ENCODE measurements at regions of chr11 and their contacts with region 1.

Region 1: GRCh38 chr11:207208-207862 is at the starts of genes BET1L and RIC8A:
- H3K4me3 Mint-ChIP-seq: peak within 1 kb of the TSS; percentile 87
- H3K27ac Mint-ChIP-seq: peak within 1 kb of the TSS; percentile 99
- H3K4me1 Mint-ChIP-seq: peaks cover 72% of the 10 kb centered on the region
- H3K27me3 Mint-ChIP-seq: no peaks in the 10 kb centered on the region

Region 2: DNA sequence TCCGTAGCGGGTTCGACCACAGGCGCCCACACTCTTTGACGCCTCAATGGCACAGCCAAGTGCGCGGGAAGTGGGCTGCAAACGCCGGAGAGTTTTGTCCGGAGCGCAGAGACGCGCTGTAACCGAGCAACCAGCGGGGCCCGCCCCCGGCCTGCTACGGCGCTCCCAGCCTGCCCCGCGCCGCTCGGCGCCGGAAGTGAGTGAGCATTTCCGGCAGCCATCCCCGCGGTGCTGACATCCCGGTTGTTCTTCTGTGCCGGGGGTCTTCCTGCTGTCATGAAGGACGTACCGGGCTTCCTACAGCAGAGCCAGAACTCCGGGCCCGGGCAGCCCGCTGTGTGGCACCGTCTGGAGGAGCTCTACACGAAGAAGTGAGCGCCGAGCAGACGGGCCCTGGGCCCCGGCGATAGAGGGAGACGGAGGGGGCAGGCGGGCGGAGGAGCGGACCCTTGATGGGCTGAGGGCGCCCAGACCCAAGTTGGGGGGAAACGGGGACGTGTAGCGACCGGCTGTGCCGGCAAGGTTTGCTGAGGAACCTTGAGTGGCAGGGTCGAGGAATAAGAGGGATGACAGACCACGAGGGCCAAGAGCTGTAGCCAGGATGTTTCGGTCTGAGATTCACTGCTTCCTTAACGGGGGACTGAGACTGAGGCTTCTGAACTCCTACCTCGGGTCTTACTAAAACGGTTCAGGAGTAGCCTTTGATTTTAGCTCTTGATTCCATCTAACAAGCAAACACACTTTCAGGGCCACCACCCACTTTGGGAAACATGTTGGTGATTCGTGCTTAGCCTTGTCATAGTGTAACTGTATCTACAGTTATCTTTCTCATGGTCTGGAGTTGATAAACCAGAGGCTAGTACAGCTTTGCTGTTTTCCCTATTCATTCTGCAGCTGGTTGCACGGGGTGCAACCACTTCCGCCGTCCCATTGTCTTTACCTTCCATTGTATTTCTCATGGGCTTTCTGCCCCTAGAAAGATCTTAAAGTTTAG is 29.7 kb after region 1 on chr11 and contains the start of gene PSMD13:
- intact Hi-C with region 1: loop called (anchors 1 kb)
- H3K4me3 Mint-ChIP-seq: peak within 1 kb of the TSS; percentile 95
- H3K27ac Mint-ChIP-seq: peak within 1 kb of the TSS; percentile 96
- H3K4me1 Mint-ChIP-seq: peaks cover 27% of the 10 kb centered on the region
- H3K27me3 Mint-ChIP-seq: no peaks in the 10 kb centered on the region

Region 3: DNA sequence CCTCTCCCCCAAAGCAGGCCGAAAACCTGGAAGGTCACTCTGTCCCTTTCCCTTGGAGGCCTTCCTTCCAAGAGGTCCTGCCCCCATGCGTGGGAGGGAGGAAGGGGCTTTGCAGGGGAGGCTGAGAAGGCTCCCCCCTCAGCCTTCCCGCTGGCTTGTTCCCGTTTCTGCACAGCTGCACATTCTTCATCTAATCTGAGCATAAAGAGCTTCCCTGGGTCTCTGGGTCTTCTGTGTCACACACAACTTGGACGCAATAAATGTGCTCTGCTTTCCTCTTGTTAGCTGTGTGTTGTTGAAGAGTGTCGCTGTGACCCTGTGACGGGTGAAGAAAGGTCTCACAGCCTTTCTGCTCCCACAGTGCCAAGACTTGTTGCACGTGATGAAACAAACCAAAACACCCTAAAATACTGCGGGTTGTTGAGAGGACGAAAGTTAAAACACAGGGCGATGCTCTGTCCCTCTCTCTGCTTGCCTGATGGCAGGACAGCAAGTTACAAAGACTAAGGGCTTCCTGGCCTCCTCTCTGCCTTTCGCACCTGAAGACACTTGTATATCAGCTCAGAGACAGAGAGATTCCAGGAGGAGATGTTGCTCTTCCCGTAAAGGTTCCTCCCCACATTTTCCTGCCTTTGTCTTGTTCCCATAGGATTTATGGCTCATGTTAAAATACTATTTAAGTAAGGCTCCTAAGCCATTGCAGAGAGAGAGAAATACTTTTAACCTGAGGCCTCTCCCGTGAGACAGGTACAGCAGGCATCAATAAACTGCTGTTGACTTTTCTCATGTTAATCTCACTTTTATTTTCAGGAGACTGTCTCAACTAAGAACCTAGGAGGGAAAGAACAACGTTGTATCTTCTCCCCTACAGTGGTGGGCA is 128.7 kb after region 1 on chr11:
- intact Hi-C with region 1: no loop called
- H3K4me3 Mint-ChIP-seq: no peak overlapping the region
- H3K27ac Mint-ChIP-seq: peak overlapping the region; percentile 79
- H3K4me1 Mint-ChIP-seq: peaks cover 26% of the 10 kb centered on the region
- H3K27me3 Mint-ChIP-seq: peaks cover 20% of the 10 kb centered on the region